AG04449 (cell line): ENCODE measurements at regions of chr4 and their contacts with region 1.

Region 1: GRCh38 chr4:110516106-110516922 is 40.4 kb downstream of the ENPEP start:
- DNase-seq: no peak
- H3K4me3 ChIP-seq: peak overlapping the region; percentile 43
- CTCF ChIP-seq: peak; percentile 74

Region 2: GRCh38 chr4:109998867-109999584 is 517.3 kb before region 1 on chr4:
- CTCF ChIA-PET with region 1: interaction called, 1,033 read pairs
- POLR2A ChIA-PET with region 1: no interaction called
- DNase-seq: no peak
- H3K4me3 ChIP-seq: no peak overlapping the region
- CTCF ChIP-seq: peak; percentile 34

Region 3: DNA sequence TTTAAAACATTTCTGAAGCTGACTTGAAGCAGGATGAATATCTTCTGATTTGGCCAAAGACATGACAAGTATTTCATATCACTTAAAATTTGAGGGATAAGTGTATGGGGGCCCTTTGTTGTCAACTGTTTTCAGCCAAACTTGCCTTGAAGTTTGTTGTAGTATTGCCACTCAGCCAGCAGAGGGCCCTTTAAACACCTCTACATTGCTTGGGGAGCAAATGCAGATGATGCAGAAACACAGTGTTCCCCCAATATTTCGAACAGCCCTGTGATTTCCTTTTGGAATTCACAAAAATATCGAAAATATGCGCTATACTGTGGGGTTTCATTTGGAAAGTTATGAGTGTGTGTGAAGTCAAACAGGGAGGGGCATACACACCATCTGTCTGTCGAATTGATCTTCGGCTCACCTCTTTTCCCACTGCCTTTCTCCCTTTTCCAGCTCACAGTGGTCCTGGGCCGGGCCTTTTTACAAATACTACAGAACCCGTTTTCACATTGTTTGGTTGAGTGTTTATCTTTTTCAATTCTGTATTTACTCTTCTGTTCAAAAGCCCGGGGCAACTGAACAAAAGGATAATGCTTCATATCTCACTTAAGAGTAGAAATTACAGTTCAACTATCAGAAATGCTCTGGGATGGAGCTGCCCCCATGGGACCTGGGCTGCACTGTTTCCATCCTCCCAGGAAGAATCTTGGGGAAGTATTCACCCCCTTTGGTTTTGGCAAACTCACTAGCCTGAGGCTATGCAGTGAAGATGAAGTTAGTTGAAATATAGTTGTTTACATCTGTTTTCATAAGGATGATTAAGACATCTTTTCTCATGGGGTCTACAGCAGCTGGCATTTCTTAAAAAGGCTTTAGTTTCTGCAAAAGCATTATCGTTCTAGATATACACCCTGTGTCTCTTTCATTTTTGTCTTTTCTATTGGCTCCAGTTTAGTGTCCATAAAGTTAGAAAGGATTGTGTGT is 466.1 kb before region 1 on chr4:
- CTCF ChIA-PET with region 1: interaction called, 158 read pairs
- POLR2A ChIA-PET with region 1: no interaction called
- DNase-seq: no peak
- H3K4me3 ChIP-seq: no peak overlapping the region
- CTCF ChIP-seq: peak; percentile 73

Region 4: DNA sequence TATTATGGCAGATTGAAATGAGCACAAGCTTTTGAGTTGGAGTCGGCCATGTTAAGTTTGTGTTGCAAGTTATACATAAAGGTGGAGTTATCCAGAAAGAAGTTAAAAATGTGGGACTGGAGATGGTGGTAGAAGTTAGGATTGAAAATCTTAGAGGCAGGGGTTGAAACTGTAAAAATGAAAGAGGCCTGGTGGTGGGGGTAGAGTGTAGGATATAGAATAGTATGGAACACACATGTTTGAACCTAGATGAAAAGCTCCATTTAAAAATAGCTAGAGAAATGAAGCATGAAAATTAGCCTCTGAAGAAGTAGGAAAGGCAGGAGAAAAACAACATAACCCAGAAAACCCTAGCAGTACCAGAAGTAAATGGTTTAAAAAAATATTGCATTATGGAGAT is 172.2 kb before region 1 on chr4:
- CTCF ChIA-PET with region 1: interaction called, 371 read pairs
- POLR2A ChIA-PET with region 1: no interaction called
- DNase-seq: no peak
- H3K4me3 ChIP-seq: no peak overlapping the region
- CTCF ChIP-seq: peak; percentile 4

Region 5: GRCh38 chr4:110533940-110534339 is 17.6 kb after region 1 on chr4:
- CTCF ChIA-PET with region 1: interaction called, 41 read pairs
- POLR2A ChIA-PET with region 1: no interaction called
- DNase-seq: peak; percentile 97
- H3K4me3 ChIP-seq: no peak overlapping the region
- CTCF ChIP-seq: no peak